Activated naive CD4-positive, alpha-beta T cell treated with anti-CD3 and anti-CD28 coated beads for 36 hours (primary cell): ENCODE measurements at regions of chrX and their contacts with region 1.

Region 1: GRCh38 chrX:41796577-41796976 is 72.6 kb downstream of the GPR82 start:
- DNase-seq: no peak
- H3K4me3 Mint-ChIP-seq: no peak overlapping the region
- H3K27ac Mint-ChIP-seq: no peak overlapping the region
- H3K4me1 Mint-ChIP-seq: peaks cover 43% of the 10 kb centered on the region
- H3K27me3 Mint-ChIP-seq: no peaks in the 10 kb centered on the region

Region 2: DNA sequence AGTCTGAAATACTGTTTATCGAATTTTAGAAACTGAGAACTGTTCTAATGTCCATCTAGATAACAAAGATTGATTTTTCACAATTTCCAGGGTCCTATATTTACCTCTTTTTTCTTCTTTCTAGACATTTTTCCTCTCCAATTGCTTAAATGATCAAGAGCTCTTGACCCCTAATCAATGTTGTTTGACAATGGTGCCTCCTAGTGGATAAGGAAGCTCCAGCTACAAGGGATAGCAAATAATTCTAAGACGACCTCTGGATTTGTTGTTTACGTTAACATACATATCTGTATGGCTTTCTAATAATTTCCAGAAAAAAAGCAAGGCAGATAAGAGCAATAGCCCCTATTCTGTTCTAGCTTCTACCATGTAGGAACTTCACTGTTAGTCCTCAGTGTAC is 36.8 kb before region 1 on chrX:
- CTCF ChIA-PET with region 1: no interaction called
- intact Hi-C with region 1: no loop called
- DNase-seq: no peak
- H3K4me3 Mint-ChIP-seq: no peak overlapping the region
- H3K27ac Mint-ChIP-seq: no peak overlapping the region
- H3K4me1 Mint-ChIP-seq: peaks cover 3% of the 10 kb centered on the region
- H3K27me3 Mint-ChIP-seq: no peaks in the 10 kb centered on the region

Region 3: DNA sequence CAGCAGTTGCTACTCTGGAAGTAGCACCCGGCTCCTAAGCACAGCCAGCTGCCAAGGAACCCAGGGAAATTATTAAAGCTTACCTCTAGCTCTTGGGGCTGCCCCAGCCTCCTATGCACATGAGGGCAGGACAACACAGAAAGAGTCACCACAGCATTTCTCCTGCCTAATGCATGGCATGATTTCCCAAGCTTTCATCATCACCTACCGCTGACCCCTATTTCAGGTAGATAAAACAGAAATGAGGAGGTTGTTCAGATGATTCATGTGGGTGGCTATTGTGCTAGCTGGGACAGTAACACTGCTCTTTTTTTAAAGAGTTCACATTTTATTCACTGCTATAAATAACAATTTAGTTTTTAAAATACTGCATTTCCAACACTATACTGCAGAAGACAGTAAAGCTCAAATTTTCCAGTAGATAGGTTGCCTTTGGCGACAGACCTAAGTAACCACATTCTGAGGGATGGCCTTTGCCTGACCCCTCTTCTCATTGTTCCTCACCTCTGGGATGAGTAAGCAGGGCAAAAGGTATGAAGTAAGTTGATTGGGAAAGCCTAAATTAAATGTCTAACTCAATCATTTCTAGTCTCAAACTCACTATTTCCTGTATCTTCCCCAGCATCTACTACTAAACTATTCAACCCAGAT is 110.1 kb after region 1 on chrX:
- CTCF ChIA-PET with region 1: no interaction called
- intact Hi-C with region 1: loop called (anchors 5 kb)
- DNase-seq: peak; percentile 55
- H3K4me3 Mint-ChIP-seq: no peak overlapping the region
- H3K27ac Mint-ChIP-seq: peak overlapping the region; percentile 79
- H3K4me1 Mint-ChIP-seq: peaks cover 44% of the 10 kb centered on the region
- H3K27me3 Mint-ChIP-seq: no peaks in the 10 kb centered on the region

Region 4: DNA sequence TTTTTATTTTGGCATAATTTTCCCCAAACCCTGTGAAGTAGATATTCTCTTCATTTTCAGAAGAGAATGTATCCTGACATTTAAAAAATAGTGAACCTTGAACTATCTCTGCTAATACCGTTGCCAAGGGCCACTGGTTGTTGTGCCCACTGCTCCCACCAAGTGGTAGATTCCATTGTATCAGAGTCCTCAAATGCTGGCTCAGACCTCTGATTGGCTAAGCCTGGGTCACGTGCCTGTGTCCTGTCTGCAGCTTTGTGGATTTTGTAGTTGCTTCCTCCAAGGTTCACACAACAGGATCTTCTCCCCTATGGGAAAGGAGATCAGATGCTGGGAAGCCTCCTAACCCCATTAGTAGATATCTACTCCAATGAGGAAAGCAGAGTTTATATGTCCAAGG is 231.5 kb after region 1 on chrX:
- CTCF ChIA-PET with region 1: no interaction called
- intact Hi-C with region 1: loop called (anchors 10 kb)
- DNase-seq: no peak
- H3K4me3 Mint-ChIP-seq: no peak overlapping the region
- H3K27ac Mint-ChIP-seq: no peak overlapping the region
- H3K4me1 Mint-ChIP-seq: no peaks in the 10 kb centered on the region
- H3K27me3 Mint-ChIP-seq: no peaks in the 10 kb centered on the region

Region 5: DNA sequence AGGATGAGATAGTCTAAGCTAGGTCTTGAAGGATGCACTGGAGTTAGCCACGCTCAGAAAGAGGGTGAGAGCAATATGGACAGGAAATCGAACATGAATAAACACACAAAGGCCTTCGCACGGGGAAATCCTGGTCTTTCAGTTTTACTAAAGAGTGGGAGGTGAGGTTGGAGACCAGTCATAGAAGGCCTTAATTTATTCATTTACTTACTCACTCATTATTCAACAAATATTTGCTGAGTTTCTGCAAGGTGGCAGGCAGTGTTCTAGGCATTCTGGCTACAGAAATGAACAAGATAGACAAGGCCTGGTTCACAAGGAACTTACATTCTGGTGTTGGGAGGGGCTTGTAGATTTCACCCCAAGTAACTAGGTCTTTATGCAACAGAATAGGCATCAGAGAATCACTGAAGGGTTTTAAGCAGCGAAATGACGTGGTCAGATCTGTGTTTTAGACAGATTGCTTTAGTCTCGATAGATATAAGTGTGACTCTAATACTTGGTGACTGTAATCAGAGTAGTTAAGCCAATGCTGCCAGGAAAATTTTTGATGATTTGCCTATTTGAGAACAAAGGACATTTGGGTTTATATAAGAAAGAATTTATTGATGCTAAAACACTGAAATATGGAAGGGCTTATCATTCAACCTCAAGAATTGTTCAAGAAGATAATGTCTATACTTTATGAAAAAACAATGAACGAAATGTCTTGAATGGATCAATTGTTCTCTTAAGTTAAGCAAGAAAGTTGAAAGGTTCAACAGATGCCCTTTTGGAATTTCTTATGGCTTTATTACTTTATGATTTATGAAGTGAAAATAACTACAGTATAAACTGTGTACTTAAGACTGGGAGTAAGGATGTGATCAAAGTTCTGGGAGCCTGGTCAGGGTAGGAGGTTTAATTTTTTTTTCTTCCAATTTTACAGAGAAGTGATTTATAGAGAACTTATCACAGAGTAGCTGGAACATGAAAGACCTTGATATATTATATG is 311.2 kb after region 1 on chrX:
- CTCF ChIA-PET with region 1: no interaction called
- intact Hi-C with region 1: loop called (anchors 10 kb)
- DNase-seq: peak; percentile 51
- H3K4me3 Mint-ChIP-seq: no peak overlapping the region
- H3K27ac Mint-ChIP-seq: no peak overlapping the region
- H3K4me1 Mint-ChIP-seq: peaks cover 14% of the 10 kb centered on the region
- H3K27me3 Mint-ChIP-seq: no peaks in the 10 kb centered on the region

Region 6: GRCh38 chrX:42948723-42949657 is 1152.4 kb after region 1 on chrX:
- CTCF ChIA-PET with region 1: no interaction called
- intact Hi-C with region 1: loop called (anchors 5 kb)
- DNase-seq: no peak
- H3K4me3 Mint-ChIP-seq: no peak overlapping the region
- H3K27ac Mint-ChIP-seq: peak overlapping the region; percentile 70
- H3K4me1 Mint-ChIP-seq: peaks cover 44% of the 10 kb centered on the region
- H3K27me3 Mint-ChIP-seq: no peaks in the 10 kb centered on the region